PC-3 (cell line): ENCODE measurements at regions of chr13 and their contacts with region 1.

Region 1: DNA sequence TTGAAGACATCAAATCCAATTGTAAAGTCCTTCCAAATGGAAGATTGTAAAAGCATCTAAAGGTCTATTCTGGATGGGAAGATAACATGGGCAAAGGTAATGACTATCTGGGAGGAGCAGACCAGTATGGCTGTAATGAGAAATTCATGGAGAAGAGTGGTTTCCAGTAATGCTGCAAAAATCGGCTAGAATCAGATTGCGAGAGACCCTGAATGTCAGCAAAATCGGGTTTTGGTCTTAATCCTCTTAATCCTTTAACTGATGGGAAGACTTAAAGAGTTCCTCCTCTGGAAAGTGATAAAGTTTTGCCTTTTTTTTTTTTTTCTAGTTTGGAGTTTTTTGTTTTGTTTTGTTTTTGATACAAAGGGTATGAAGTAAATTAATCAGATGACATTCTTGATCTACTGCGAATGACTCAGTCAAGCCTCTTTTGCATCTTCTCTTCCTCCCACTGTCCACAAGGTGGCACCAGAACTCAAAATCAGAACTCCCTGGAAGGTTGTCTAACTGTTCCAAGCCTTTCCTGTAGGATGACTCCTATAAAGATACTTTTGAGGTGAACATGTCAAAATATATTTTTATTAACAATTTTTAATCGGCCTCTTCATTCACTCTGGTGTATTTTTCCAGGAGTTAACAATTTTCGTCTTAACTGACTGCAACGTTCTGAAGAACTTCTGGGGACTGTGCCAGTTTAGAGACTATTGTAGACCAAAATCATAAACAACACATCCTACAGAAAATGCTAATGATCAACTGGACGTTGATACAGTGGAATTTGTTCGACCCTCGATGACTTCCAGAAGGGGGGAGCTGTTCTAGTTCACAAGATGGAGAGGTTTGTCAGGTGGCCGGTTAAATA is 213.3 kb upstream of the MIR17HG start:
- DNase-seq: peak; percentile 61
- ATAC-seq: peak; percentile 81
- H3K4me3 ChIP-seq: no peak overlapping the region
- H3K27ac ChIP-seq: no peak overlapping the region
- H3K4me1 ChIP-seq: no peaks in the 10 kb centered on the region
- H3K27me3 ChIP-seq: peaks cover 12% of the 10 kb centered on the region; the same call in 1 of the 2 replicates
- CTCF ChIP-seq: peak; percentile 74

Region 2: DNA sequence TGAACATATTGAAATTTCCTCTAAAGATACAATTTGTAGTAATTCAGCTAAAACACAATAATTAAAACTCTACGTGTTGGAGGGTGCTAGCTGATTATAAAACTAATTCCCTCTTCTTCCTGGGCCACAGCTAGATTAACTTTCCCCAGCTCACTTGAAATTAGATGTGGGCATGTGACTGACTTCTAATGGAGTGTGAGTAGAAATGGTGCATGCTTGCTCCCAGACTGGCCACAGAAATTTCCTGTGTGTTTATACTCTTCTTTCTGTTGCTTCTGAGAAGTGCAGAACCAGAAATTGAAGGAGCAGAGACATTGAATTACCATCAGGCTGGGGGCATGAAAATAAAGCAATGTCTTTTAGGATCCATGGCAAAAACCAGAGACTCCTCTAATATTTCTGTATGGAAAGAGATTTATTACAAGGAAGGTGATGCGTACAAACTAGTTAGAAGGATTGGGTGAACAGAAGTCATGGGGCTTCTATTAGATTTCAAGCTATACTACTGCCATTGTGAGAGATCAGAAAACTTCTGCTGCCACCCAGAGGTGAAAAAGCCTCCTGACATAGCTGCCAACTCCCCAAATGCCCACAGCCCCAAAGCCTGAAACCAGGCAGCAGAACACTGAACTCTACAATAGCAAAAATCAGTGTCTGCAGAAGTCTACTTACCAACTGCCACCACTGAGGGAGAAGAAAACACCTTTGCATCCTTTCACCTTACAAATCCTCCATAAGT is 165.8 kb before region 1 on chr13:
- CTCF ChIA-PET with region 1: no interaction called
- POLR2A ChIA-PET with region 1: no interaction called
- intact Hi-C with region 1: no loop called
- DNase-seq: peak; percentile 65
- ATAC-seq: peak; percentile 96
- H3K4me3 ChIP-seq: no peak overlapping the region
- H3K27ac ChIP-seq: no peak overlapping the region
- H3K4me1 ChIP-seq: no peaks in the 10 kb centered on the region
- H3K27me3 ChIP-seq: no peaks in the 10 kb centered on the region
- CTCF ChIP-seq: peak; percentile 74

Region 3: GRCh38 chr13:91158017-91158395 is 23.8 kb after region 1 on chr13:
- CTCF ChIA-PET with region 1: no interaction called
- POLR2A ChIA-PET with region 1: no interaction called
- intact Hi-C with region 1: loop called (anchors 1 kb)
- DNase-seq: peak; percentile 15
- ATAC-seq: no peak
- H3K4me3 ChIP-seq: no peak overlapping the region
- H3K27ac ChIP-seq: no peak overlapping the region
- H3K4me1 ChIP-seq: 0 out of 2 replicates have a peak, but pooled peaks cover 3% of the 10 kb centered on the region
- H3K27me3 ChIP-seq: peaks cover 21% of the 10 kb centered on the region; the same call in 1 of the 2 replicates
- CTCF ChIP-seq: peak; percentile 39; the same call in 1 of the 2 replicates

Region 4: GRCh38 chr13:91185294-91185863 is 51.2 kb after region 1 on chr13:
- CTCF ChIA-PET with region 1: interaction called, 9 read pairs
- POLR2A ChIA-PET with region 1: no interaction called
- intact Hi-C with region 1: loop called (anchors 1 kb)
- DNase-seq: peak; percentile 54
- ATAC-seq: peak; percentile 65
- H3K4me3 ChIP-seq: no peak overlapping the region
- H3K27ac ChIP-seq: no peak overlapping the region
- H3K4me1 ChIP-seq: no peaks in the 10 kb centered on the region
- H3K27me3 ChIP-seq: peaks cover 16% of the 10 kb centered on the region
- CTCF ChIP-seq: peak; percentile 55

Region 5: DNA sequence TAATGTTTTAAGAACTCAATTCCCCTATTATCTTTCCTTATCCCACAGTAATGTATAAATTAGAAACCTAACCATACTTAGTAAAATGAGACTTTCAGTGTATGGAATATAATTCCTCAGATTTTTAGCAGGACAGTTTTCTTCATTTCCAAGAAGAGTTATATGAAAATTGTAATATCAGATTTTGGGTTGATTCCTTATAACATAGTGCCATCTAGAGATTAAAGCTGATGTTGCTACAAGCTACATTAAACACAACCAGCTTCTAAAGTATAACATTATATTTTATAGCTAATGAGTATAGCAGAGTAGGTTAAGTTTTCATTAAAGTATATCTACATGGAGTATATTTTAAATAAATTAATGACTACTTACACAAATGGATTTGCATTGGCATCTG is 113.6 kb after region 1 on chr13:
- CTCF ChIA-PET with region 1: no interaction called
- POLR2A ChIA-PET with region 1: no interaction called
- intact Hi-C with region 1: loop called (anchors 1 kb)
- DNase-seq: peak; percentile 23
- ATAC-seq: no peak; the same call in 1 of the 2 replicates
- H3K4me3 ChIP-seq: no peak overlapping the region
- H3K27ac ChIP-seq: no peak overlapping the region
- H3K4me1 ChIP-seq: no peaks in the 10 kb centered on the region
- H3K27me3 ChIP-seq: peaks cover 28% of the 10 kb centered on the region
- CTCF ChIP-seq: peak; percentile 52